Colonic mucosa (tissue), 4 donors: ENCODE measurements at regions of chr3 and their contacts with region 1.

Region 1: DNA sequence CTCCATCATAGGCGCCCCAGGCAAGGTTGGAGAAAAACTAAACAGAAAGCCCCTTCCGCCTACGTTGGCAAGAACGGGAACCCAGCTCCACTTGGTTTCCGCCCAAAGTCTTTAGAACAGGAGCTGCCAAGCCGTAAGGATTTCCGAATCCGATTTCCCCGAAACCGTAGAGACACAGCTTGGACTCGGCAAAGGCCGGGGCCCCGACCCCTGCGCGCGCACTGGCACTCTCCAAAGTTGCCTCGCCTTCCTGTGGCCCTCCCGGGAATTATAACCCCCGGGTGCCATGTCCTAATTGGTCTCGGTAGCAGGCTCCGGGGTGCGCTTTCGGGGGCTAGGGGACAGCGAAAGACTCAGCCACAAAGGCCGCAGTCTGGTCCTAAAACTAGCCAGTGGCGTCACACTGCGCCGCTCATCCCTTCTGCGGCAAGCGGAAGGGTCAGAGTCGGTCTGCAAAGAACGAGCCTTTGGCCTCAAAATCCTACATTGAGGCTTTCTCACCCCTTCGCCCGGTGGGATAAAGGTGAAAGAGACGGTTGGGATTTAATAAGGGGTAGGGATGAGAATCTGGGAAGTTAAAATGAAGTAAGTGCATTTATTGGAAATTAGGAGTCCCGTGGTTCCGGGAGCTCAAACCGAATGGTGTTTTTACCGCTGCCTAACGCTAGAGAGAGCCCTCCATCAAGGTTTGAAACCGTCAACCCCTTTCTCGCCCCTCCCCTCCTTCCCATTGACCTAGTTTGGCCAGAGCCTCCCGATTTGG is 6.8 kb downstream of the BCL6 start:
- DNase-seq: peak; percentile 94
- H3K4me3 ChIP-seq: peak overlapping the region; percentile 54
- H3K27ac ChIP-seq: peak overlapping the region; percentile 97
- H3K4me1 ChIP-seq: peaks cover 3% of the 10 kb centered on the region
- H3K27me3 ChIP-seq: no peaks in the 10 kb centered on the region
- CTCF ChIP-seq: peak; percentile 59

Region 2: DNA sequence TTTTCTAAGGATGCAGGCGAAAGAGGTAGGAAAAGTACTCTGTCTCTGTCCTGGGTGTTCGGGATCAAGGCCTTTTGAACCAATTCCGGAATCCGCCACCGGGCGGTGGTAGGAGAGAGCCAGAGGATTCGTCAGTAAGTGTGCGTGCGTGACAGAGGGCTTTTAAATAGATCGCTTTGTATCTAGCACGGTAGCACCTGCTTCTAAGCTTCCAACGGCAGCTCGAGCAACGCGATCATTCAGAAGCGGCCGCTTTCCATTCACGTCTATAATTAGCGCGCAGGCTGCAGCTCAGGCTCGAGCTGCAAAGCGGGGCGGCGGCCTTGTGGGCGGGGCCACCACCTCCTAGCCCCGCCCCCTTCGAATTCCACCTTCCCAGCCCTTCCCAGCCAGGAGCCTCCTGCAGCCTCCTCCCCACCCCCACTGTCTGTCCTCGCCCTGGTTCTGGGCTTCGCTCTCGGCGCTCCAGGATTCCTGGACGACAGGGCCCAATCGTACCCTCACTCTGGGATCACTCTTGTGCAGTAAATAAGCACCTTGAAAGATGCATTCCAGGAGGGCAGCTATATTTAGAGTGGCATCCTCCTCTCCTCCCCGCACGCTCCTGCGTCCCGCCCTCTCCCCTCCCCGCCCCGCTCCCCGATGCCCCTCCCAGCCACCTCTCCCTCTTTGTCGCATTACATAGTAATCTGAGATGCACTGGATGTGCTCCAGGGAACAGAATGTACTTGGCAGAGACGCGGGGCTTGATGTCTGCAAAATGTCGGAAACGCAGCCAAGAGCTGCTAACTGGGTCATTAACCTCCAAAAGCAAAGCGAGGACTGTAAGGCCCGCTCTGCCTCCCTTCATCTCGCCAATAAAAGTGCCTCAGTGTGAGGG is 1209.1 kb after region 1 on chr3:
- intact Hi-C with region 1: loop called (anchors 2 kb)
- DNase-seq: peak; percentile 89
- H3K4me3 ChIP-seq: peak overlapping the region; percentile 28
- H3K27ac ChIP-seq: peak overlapping the region; percentile 59
- H3K4me1 ChIP-seq: no peaks in the 10 kb centered on the region
- H3K27me3 ChIP-seq: no peaks in the 10 kb centered on the region
- CTCF ChIP-seq: peak; percentile 17

Region 3: DNA sequence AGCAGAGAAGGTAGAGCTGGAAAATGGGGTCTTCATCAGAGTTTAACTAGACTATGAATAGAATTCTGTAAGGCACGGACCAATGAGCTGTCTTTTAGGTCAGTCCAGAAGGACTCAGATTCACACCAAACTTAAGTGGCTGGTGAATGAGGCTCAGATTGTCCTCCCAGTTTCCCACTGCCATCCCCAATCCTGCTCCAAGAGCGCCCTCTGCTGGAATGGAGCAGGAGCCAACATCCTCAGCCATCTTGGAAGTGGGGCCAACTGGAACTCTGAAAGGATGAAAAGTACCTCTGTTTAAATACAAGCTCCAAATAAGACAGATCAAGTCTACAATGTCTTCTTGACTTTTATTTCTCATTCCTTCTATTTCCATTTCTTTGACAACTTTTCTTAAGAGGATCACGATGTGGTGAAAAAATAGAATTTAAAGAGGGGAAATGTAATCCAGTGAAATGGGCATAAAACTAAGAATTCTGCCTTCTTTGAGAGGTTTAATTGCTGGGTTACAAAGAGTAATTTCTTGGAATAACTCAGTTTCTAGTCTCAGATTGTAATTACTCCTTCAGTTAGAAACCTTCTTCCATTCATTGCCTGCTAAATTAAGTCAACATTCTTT is 1216.2 kb after region 1 on chr3:
- intact Hi-C with region 1: loop called (anchors 2 kb)
- DNase-seq: peak; percentile 90
- H3K4me3 ChIP-seq: no peak overlapping the region
- H3K27ac ChIP-seq: no peak overlapping the region
- H3K4me1 ChIP-seq: no peaks in the 10 kb centered on the region
- H3K27me3 ChIP-seq: no peaks in the 10 kb centered on the region
- CTCF ChIP-seq: peak; percentile 94

Region 4: GRCh38 chr3:189148081-189148507 is 1409.6 kb after region 1 on chr3:
- intact Hi-C with region 1: loop called (anchors 5 kb)
- DNase-seq: peak; percentile 76
- H3K4me3 ChIP-seq: no peak overlapping the region
- H3K27ac ChIP-seq: no peak overlapping the region
- H3K4me1 ChIP-seq: no peaks in the 10 kb centered on the region
- H3K27me3 ChIP-seq: no peaks in the 10 kb centered on the region
- CTCF ChIP-seq: peak; percentile 65

Region 5: GRCh38 chr3:189233225-189233858 is 1494.8 kb after region 1 on chr3:
- intact Hi-C with region 1: loop called (anchors 10 kb)
- DNase-seq: peak; percentile 79
- H3K4me3 ChIP-seq: no peak overlapping the region
- H3K27ac ChIP-seq: no peak overlapping the region
- H3K4me1 ChIP-seq: no peaks in the 10 kb centered on the region
- H3K27me3 ChIP-seq: no peaks in the 10 kb centered on the region
- CTCF ChIP-seq: peak; percentile 42